ENCODE measurements at regions of chr17 and their contacts with region 1.

Region 1: GRCh38 chr17:40536295-40537171 is 28.7 kb downstream of the CCR7 start:
- DNase-seq: peak; percentile 85
- H3K4me3 ChIP-seq: no peak overlapping the region
- H3K27ac ChIP-seq: peak overlapping the region; percentile 51 to 91 (median 86)
- H3K4me1 ChIP-seq: peaks cover 64 to 100% (median 92%) of the 10 kb centered on the region in 6 donors
- H3K27me3 ChIP-seq: no peaks in the 10 kb centered on the region
- CTCF ChIP-seq: no peak
- POLR2A ChIP-seq: no peak

Region 2: GRCh38 chr17:40303009-40303657 is 233.4 kb before region 1 on chr17:
- intact Hi-C with region 1: loop called (anchors 10 kb)
- DNase-seq: no peak
- H3K4me3 ChIP-seq: no peak overlapping the region
- H3K27ac ChIP-seq: peak overlapping the region in 3 of 8 donors; percentile 33 to 58 (median 50)
- H3K4me1 ChIP-seq: peaks cover 24 to 54% (median 39%) of the 10 kb centered on the region in 6 donors
- H3K27me3 ChIP-seq: no peaks in the 10 kb centered on the region
- CTCF ChIP-seq: peak; percentile 62 to 93 (median 84)
- POLR2A ChIP-seq: no peak

Region 3: DNA sequence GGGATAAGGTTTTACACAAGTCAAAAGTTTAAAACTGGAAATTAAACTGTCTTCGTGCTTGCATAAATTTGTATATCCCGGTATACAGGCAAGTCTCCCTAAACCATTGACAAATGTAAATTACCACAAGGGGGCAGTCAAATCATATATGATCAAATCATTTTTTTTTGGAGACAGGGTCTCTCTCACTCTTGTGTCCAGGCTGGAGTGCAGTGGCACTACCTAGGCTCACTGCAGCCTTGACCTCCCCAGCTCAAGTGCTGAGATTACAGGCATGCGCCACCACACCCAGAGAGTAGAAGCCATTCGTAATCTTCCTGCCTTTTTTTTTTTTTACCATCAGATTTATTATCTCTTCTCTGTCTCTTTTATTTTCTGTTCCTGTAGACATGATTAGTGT is 137.3 kb before region 1 on chr17:
- intact Hi-C with region 1: loop called (anchors 10 kb)
- DNase-seq: no peak
- H3K4me3 ChIP-seq: no peak overlapping the region
- H3K27ac ChIP-seq: no peak overlapping the region
- H3K4me1 ChIP-seq: peaks cover 0 to 9% (median 2%) of the 10 kb centered on the region in 6 donors
- H3K27me3 ChIP-seq: no peaks in the 10 kb centered on the region
- CTCF ChIP-seq: peak; percentile 25 to 78 (median 64)
- POLR2A ChIP-seq: no peak

Region 4: DNA sequence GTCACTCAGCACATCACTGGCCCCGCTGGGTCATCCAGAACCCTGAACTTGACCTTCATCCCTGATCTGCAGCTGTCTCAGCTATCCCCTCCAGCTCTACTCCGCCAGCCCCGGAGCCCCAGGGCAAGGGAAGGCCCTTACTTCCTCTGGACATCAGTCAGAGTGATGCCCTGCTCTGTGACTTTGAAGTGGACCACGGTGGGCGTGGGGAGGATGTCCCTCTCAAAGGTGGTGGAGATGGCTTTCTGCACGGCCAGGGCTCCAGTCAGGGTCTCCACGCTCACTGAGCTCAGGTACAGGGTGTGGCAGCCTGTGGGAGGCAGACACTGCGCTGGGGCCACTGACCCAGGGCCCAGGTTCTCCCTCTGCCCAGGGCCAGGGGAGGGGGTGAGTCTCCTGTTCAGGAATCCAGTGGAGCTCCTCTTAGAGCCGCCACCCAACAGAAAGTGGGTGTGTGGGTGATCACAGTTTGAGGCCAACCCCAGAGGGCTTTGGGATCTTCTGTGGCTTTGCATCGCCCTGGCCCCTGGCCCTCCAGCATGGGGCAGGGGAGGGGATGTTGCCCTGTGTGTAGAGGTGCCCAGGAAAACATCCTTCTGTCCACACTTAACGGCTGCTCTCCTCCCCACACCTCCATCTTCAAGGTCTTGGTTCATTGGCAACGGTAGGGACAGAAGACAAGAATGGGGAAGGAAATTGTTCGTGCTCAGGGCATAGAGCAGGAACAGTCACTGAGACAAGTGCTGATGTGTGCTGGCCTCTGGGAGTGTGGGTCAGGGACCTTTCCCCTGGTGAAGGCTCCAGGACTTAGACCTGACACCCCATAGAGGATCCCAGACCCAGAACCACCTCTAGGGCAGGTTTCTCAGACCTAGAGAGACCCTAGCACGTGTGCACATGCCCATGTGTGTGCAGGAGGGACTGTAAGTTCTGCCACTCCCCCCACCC is 56.7 kb before region 1 on chr17:
- intact Hi-C with region 1: no loop called
- DNase-seq: peak; percentile 74
- H3K4me3 ChIP-seq: peak overlapping the region in 1 of 8 donors; percentile 27
- H3K27ac ChIP-seq: peak overlapping the region in 6 of 8 donors; percentile 51 to 82 (median 67)
- H3K4me1 ChIP-seq: peaks cover 21 to 67% (median 36%) of the 10 kb centered on the region in 6 donors
- H3K27me3 ChIP-seq: no peaks in the 10 kb centered on the region
- CTCF ChIP-seq: no peak
- POLR2A ChIP-seq: no peak

Measured in spleen (tissue), 13 donors.